Left colon (tissue), 2 donors: ENCODE measurements at regions of chr10 and their contacts with region 1.

Region 1: DNA sequence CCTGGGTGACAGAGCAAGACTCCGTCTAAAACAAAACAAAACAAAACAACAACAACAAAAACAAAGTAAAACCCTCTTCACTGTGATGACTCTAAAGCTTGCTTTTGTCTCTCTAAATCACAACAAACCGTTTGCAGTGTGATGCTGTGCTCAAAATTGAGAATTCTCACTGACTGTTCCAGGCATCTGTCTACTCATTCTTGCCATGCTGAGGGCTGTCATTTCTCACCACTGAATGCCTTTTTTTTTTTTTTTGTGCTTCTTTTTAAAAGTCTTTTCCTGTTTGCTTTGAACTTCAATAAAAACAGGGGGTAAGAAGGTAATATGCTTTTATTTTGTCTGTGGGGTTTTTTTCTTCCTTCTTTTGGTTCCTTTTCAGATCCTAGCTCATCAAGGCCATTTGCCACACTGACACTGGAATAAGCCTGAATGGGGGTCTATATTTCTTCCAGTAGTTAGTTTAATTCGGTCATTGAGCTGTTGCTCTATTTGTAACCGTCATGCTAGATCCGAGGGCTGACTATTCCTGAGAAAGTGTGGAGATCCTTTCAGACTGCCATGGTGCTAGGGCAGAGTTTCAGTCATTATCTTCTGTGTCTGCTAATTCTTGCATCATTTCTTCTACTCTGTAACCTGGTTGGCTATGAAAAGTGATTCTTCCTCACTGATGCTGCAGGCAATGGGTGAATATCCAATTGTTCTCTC is 10.6 kb downstream of the FAS start:
- DNase-seq: no peak
- ATAC-seq: peak; percentile 12

Region 2: GRCh38 chr10:88848499-88848898 is 152.7 kb before region 1 on chr10:
- intact Hi-C with region 1: loop called in 1 of 2 experiments (anchors 10 kb)
- DNase-seq: no peak
- ATAC-seq: peak; percentile 17